Activated CD8-positive, alpha-beta T cell treated with anti-CD3 and anti-CD28 coated beads, Interleukin-2, amount 10 ng/mL, durations not matched to agents 7 days and 5 days (primary cell): ENCODE measurements at regions of chr15 and their contacts with region 1.

Region 1: GRCh38 chr15:72312605-72313447 is 7.1 kb downstream of the CELF6 start:
- DNase-seq: peak; percentile 75
- ATAC-seq: peak; percentile 92
- H3K4me3 Mint-ChIP-seq: no peak overlapping the region
- H3K27ac Mint-ChIP-seq: no peak overlapping the region
- H3K4me1 Mint-ChIP-seq: no peaks in the 10 kb centered on the region
- H3K27me3 Mint-ChIP-seq: peaks cover 5% of the 10 kb centered on the region

Region 2: GRCh38 chr15:72272213-72273002 is 40.4 kb before region 1 on chr15 and contains the start of gene PARP6:
- CTCF ChIA-PET with region 1: no interaction called
- POLR2A ChIA-PET with region 1: no interaction called
- DNase-seq: peak; percentile 97
- ATAC-seq: peak; percentile 99
- H3K4me3 Mint-ChIP-seq: peak within 1 kb of the TSS; percentile 88
- H3K27ac Mint-ChIP-seq: peak within 1 kb of the TSS; percentile 82
- H3K4me1 Mint-ChIP-seq: peaks cover 34% of the 10 kb centered on the region
- H3K27me3 Mint-ChIP-seq: peaks cover 2% of the 10 kb centered on the region
- total RNA-seq, gene PARP6: 54.0 to 57.0 TPM

Region 3: DNA sequence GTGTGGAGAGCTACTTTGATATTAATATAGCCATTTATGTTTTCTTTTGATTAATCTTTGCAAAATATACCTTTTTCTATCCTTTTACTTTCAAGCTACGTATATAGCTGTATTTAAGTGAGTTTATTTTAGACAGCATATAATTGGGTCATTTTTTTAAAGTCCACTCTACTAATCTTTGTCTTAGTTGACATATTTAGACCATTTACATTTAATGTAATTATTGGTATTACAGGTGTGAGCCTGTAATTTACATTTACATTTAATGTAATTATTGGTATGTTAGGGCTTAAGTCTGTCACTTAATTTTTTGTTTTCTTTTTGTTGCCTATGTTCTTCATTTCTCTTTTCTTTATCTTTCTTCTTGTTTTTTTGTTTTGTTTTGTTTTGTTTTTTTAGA is 10.9 kb after region 1 on chr15:
- CTCF ChIA-PET with region 1: interaction called, 10 read pairs
- POLR2A ChIA-PET with region 1: no interaction called
- DNase-seq: no peak
- ATAC-seq: no peak
- H3K4me3 Mint-ChIP-seq: no peak overlapping the region
- H3K27ac Mint-ChIP-seq: no peak overlapping the region
- H3K4me1 Mint-ChIP-seq: peaks cover 16% of the 10 kb centered on the region
- H3K27me3 Mint-ChIP-seq: peaks cover 17% of the 10 kb centered on the region

Region 4: GRCh38 chr15:72532991-72533601 is 220.3 kb after region 1 on chr15:
- CTCF ChIA-PET with region 1: interaction called, 10 read pairs
- POLR2A ChIA-PET with region 1: no interaction called
- DNase-seq: peak; percentile 36
- ATAC-seq: no peak
- H3K4me3 Mint-ChIP-seq: no peak overlapping the region
- H3K27ac Mint-ChIP-seq: no peak overlapping the region
- H3K4me1 Mint-ChIP-seq: peaks cover 28% of the 10 kb centered on the region
- H3K27me3 Mint-ChIP-seq: no peaks in the 10 kb centered on the region

Region 5: GRCh38 chr15:72599855-72600464 is 287.1 kb after region 1 on chr15:
- CTCF ChIA-PET with region 1: interaction called, 12 read pairs
- POLR2A ChIA-PET with region 1: no interaction called
- DNase-seq: peak; percentile 52
- ATAC-seq: peak; percentile 49
- H3K4me3 Mint-ChIP-seq: no peak overlapping the region
- H3K27ac Mint-ChIP-seq: no peak overlapping the region
- H3K4me1 Mint-ChIP-seq: no peaks in the 10 kb centered on the region
- H3K27me3 Mint-ChIP-seq: peaks cover 7% of the 10 kb centered on the region

Region 6: GRCh38 chr15:72671535-72671934 is 358.7 kb after region 1 on chr15:
- CTCF ChIA-PET with region 1: interaction called, 10 read pairs
- POLR2A ChIA-PET with region 1: no interaction called
- DNase-seq: no peak
- ATAC-seq: no peak
- H3K4me3 Mint-ChIP-seq: no peak overlapping the region
- H3K27ac Mint-ChIP-seq: no peak overlapping the region
- H3K4me1 Mint-ChIP-seq: peaks cover 7% of the 10 kb centered on the region
- H3K27me3 Mint-ChIP-seq: peaks cover 14% of the 10 kb centered on the region